Naive thymus-derived CD4-positive, alpha-beta T cell (primary cell): ENCODE measurements at regions of chr1 and their contacts with region 1.

Region 1: DNA sequence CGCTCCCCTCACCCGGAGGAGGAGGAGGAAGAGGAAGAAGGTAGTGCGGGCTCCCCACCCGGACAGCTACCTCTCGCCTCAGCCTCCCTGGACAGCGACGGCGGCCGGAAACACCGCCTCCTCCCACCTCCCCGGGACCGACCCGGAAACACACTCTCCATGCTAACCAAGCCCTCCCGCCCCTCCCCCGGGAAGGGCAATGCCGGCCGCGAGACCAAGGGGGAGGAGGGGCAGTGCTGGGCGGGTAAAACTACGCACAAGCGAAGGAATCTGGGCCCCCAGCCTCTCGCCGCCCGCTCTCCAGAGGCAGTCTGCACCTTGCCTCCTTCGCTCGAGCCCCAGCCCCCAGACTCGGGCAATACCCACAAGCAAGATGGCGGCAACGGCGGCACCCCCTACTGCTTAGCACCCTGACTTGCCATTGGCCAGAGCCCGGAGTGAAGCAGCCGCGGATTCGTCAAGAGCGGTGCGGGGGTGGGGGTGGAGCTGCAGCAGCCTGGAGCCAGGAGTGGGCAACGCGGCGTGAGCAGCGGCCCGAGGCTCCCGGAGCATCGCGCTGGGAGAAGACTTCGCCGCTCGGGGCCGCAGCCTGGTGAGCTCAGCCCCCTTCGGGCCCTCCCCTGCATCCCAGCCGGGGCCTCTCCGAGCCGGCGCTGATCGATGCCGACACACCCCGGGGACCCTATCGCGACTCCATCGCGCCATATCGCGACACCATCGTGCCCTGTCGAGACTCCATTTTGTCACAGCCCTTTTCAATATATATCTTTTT is at the starts of genes KIAA0319L and NCDN:
- DNase-seq: peak; percentile 86 to 96 (median 94)
- ATAC-seq: peak; percentile 96
- H3K4me3 ChIP-seq: peak within 1 kb of the TSS; percentile 87
- H3K4me3 Mint-ChIP-seq: peak within 1 kb of the TSS; percentile 90 to 99 (median 96)
- H3K27ac ChIP-seq: peak within 1 kb of the TSS; percentile 77
- H3K27ac Mint-ChIP-seq: peak within 1 kb of the TSS; percentile 89 to 98 (median 93)
- H3K4me1 ChIP-seq: peaks cover 16 to 19% of the 10 kb centered on the region in 2 donors
- H3K4me1 Mint-ChIP-seq: peaks cover 40 to 69% (median 53%) of the 10 kb centered on the region in 7 donors
- H3K27me3 ChIP-seq: no peaks in the 10 kb centered on the region
- H3K27me3 Mint-ChIP-seq: no peaks in the 10 kb centered on the region
- total RNA-seq, gene KIAA0319L: 62.0 to 79.7 (median 65.6) TPM
- total RNA-seq, gene NCDN: 19.4 to 38.6 (median 26.4) TPM

Region 2: GRCh38 chr1:35192853-35193664 is 364.4 kb before region 1 on chr1 and contains the start of gene SFPQ:
- CTCF ChIA-PET with region 1: no interaction called
- POLR2A ChIA-PET with region 1: interaction called, 4 read pairs
- intact Hi-C with region 1: loop called (anchors 2 kb)
- DNase-seq: peak; percentile 94 to 99 (median 98)
- ATAC-seq: peak; percentile 94
- H3K4me3 ChIP-seq: peak within 1 kb of the TSS; percentile 72
- H3K4me3 Mint-ChIP-seq: peak within 1 kb of the TSS; percentile 92 to 98 (median 96)
- H3K27ac ChIP-seq: peak within 1 kb of the TSS; percentile 99
- H3K27ac Mint-ChIP-seq: peak within 1 kb of the TSS; percentile 92 to 99 (median 98)
- H3K4me1 ChIP-seq: peaks cover 31 to 32% of the 10 kb centered on the region in 2 donors
- H3K4me1 Mint-ChIP-seq: peaks cover 34 to 52% (median 47%) of the 10 kb centered on the region in 7 donors
- H3K27me3 ChIP-seq: no peaks in the 10 kb centered on the region
- H3K27me3 Mint-ChIP-seq: peaks cover 0 to 5% (median 0%) of the 10 kb centered on the region in 5 donors
- total RNA-seq, gene SFPQ: 316 to 610 (median 356) TPM

Region 3: DNA sequence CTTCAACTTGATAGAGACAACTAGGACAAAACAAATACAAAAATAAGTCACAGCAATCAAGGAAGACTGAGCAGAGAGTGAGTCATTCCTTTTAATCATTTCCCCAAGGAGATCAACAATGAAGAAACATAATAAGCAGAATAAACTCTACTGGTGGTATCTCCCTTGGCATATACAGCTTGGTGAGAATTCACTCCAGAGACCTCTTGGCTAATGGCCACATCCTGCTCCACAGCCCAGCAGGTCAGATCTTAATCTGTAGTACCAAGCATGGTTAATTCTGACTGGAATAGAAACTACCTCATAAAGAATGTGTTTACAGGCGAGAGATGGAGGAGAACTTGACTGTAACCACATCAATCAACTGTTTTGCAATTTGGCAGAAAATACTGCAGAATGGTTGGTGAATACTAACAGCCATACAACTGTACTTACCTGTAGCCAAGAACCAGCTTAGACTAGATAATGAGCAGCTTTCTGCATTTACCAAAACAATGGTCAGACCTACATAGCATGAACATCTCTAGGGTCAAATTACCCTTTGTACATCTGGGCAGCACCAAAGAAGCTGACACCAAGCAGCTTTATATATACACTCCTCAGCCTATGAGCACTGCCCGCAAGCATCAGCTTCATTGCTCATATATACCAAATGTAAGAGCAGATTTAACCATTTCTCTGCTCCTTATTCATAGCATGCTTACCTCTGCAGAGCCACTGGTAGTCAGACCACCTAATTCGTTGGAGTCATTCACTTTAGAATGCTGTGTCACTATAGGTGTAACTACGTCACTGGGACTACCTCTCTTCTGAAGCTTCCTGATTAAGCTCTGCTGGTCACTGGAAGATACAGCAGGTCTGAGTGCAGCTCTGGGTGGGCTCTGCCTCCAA is 51.3 kb before region 1 on chr1:
- CTCF ChIA-PET with region 1: interaction called, 4 read pairs
- POLR2A ChIA-PET with region 1: interaction called, 7 read pairs
- intact Hi-C with region 1: loop called (anchors 1 to 2 kb)
- DNase-seq: peak in 8 of 9 donors; percentile 29 to 73 (median 56)
- ATAC-seq: peak; percentile 84
- H3K4me3 ChIP-seq: peak overlapping the region; percentile 16
- H3K4me3 Mint-ChIP-seq: peak overlapping the region; percentile 75 to 84 (median 78)
- H3K27ac ChIP-seq: peak overlapping the region; percentile 60
- H3K27ac Mint-ChIP-seq: peak overlapping the region; percentile 73 to 97 (median 93)
- H3K4me1 ChIP-seq: peaks cover 32 to 45% of the 10 kb centered on the region in 2 donors
- H3K4me1 Mint-ChIP-seq: peaks cover 44 to 85% (median 82%) of the 10 kb centered on the region in 7 donors
- H3K27me3 ChIP-seq: no peaks in the 10 kb centered on the region
- H3K27me3 Mint-ChIP-seq: no peaks in the 10 kb centered on the region

Region 4: GRCh38 chr1:35577071-35577998 is 19.9 kb after region 1 on chr1:
- CTCF ChIA-PET with region 1: interaction called, 7 read pairs
- POLR2A ChIA-PET with region 1: interaction called, 4 read pairs
- intact Hi-C with region 1: loop called in 1 of 2 experiments (anchors 2 kb)
- DNase-seq: peak in 8 of 9 donors; percentile 44 to 65 (median 60)
- ATAC-seq: peak; percentile 83
- H3K4me3 ChIP-seq: peak overlapping the region; percentile 57
- H3K4me3 Mint-ChIP-seq: peak overlapping the region; percentile 78 to 96 (median 86)
- H3K27ac ChIP-seq: peak overlapping the region; percentile 24
- H3K27ac Mint-ChIP-seq: peak overlapping the region; percentile 40 to 98 (median 74)
- H3K4me1 ChIP-seq: peaks cover 9 to 13% of the 10 kb centered on the region in 2 donors
- H3K4me1 Mint-ChIP-seq: peaks cover 15 to 38% (median 24%) of the 10 kb centered on the region in 7 donors
- H3K27me3 ChIP-seq: no peaks in the 10 kb centered on the region
- H3K27me3 Mint-ChIP-seq: peaks cover 0 to 39% (median 0%) of the 10 kb centered on the region in 5 donors

Region 5: DNA sequence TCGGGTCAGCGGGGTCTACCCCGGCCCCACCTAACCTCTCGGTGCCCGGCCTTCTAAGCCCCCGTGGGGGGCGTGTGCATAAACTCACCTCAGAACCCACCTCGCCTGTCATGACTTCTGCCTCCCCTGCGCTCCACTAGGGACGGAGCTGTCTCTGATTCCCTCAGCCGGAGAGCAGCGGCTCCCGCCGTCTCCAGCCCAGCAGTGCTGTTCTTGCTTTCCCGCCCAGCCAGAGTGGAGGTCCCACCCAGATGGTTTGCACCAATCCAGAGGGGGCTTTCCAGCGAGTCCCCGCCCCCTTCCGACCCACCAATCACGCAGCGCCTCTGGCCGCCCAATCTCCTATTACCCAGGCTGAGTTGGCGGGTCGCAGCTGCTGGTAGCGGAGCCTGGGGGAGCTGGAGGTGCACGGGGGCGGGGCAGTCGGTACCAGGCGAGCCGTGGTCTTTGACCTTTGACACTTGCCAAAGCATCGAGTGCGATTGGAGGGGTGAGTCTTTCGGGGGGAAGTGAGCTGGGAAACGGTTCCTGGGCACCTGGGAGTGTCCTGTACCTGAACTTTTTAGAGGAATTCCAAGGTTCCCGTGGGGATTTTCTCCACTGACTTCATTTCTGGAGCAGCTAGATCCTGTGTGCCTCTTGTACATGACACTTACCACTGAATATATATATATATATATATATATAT is 212.4 kb after region 1 on chr1 and contains the start of gene CLSPN:
- CTCF ChIA-PET with region 1: no interaction called
- POLR2A ChIA-PET with region 1: interaction called, 7 read pairs
- intact Hi-C with region 1: loop called in 1 of 2 experiments (anchors 1 kb)
- DNase-seq: peak; percentile 75 to 95 (median 88)
- ATAC-seq: peak; percentile 97
- H3K4me3 ChIP-seq: peak within 1 kb of the TSS; percentile 87
- H3K4me3 Mint-ChIP-seq: peak within 1 kb of the TSS; percentile 97 to 100 (median 99)
- H3K27ac ChIP-seq: peak within 1 kb of the TSS; percentile 88
- H3K27ac Mint-ChIP-seq: peak within 1 kb of the TSS; percentile 73 to 96 (median 94)
- H3K4me1 ChIP-seq: no peaks in the 10 kb centered on the region
- H3K4me1 Mint-ChIP-seq: peaks cover 0 to 29% (median 11%) of the 10 kb centered on the region in 7 donors
- H3K27me3 ChIP-seq: no peaks in the 10 kb centered on the region
- H3K27me3 Mint-ChIP-seq: no peaks in the 10 kb centered on the region
- total RNA-seq, gene CLSPN: 0.11 to 48.7 (median 0.64) TPM